ENCODE measurements at regions of chr7 and their contacts with region 1.

Region 1: DNA sequence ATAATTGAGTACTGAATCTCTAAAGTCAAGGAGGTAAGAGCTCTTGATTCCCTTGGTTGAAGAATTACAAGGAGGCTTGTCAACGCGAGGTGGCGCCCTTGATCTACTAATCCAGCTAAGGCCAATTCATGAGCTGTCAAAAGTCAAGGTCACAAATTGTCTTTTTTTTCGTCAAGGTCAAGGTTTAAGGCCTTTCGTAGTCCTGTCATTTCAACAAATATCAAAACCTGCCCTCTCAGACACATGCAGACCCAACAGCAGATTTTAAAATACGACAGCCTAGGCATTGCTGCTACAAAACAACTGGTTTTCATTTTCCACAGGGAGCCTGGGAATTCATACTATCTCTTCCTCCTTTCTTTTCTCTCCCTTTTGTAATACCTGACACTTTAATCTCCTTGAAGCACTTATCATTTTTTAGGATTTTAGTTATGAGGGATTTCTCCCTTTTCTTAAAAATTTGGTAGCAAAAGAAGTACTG is 3.6 kb downstream of the HOXA13 start:
- DNase-seq: peak; percentile 94
- H3K4me3 ChIP-seq: peak overlapping the region; percentile 63 to 78 (median 70)
- H3K27ac ChIP-seq: peak overlapping the region in 3 of 4 donors; percentile 97 to 98 (median 98)
- H3K4me1 ChIP-seq: peaks cover 0 to 60% (median 35%) of the 10 kb centered on the region in 4 donors
- H3K27me3 ChIP-seq: peaks cover 0 to 36% (median 0%) of the 10 kb centered on the region in 3 donors
- CTCF ChIP-seq: peak in 3 of 4 experiments; percentile 58 to 81 (median 76)
- EP300 ChIP-seq: no peak
- POLR2A ChIP-seq: no peak

Region 2: DNA sequence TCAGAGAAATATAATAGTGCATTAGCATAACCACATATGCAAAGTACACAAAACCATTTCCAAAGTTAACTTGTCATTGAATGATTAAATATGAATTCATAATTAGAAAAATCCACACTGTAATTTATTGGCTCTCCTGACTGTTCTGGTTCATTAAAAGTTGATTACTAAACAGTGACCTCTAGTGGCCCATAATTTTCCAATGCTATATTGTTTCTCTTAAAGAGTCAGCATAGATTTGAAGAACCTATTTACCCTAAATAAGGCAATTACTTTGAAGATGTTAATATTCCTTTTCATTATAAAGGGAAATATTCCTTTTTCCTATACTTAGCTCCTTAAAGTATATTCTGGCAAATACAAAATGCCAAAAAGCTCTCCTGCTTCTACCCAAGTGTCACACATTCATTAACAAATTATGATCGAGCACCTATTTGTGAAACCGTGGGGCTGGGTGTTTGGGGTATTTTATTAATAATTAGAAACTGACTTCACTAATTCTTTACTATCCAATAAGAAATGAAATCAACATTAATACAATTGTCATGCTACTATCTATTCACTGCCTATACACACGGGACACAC is 380.1 kb after region 1 on chr7:
- intact Hi-C with region 1: loop called (anchors 2 kb)
- DNase-seq: no peak
- H3K4me3 ChIP-seq: no peak overlapping the region
- H3K27ac ChIP-seq: no peak overlapping the region
- H3K4me1 ChIP-seq: no peaks in the 10 kb centered on the region
- H3K27me3 ChIP-seq: no peaks in the 10 kb centered on the region
- CTCF ChIP-seq: peak in 3 of 4 experiments; percentile 23 to 58 (median 47)
- EP300 ChIP-seq: no peak
- POLR2A ChIP-seq: no peak

Region 3: DNA sequence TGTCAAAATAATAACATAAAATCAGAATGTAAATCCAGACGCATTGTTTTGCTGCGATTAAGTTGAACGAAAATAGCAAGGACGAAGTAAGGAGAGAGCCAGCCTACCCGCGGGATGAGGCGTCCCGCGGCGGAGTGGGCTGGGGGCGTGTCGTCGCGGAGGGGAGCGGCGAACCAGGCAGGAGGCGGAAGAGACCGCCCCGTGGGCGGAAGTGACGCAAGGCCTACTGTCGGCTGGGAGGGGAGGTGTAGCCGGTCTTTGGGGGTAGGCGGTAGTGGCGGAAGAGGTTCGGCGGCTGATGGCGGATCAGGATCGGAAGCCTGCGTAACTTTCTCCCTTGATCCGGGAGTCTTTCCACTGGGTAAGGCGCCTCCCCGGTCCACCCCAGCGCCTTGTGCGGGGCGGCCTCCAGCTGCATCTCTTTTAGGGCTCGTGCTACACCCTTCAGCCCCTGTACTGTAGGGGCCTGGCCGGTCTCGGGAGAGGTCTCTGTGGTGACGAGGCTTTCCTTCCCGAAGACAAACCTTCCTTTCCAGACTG is 543.7 kb after region 1 on chr7 and contains the start of gene TAX1BP1:
- intact Hi-C with region 1: loop called (anchors 5 kb)
- DNase-seq: peak; percentile 98
- H3K4me3 ChIP-seq: peak within 1 kb of the TSS; percentile 68 to 93 (median 90)
- H3K27ac ChIP-seq: peak within 1 kb of the TSS; percentile 93 to 99 (median 97)
- H3K4me1 ChIP-seq: peaks cover 0 to 47% (median 31%) of the 10 kb centered on the region in 4 donors
- H3K27me3 ChIP-seq: no peaks in the 10 kb centered on the region
- CTCF ChIP-seq: no peak
- EP300 ChIP-seq: peak in 1 of 4 donors; percentile 18
- POLR2A ChIP-seq: peak; percentile 99
- total RNA-seq, gene TAX1BP1: 109 to 170 (median 138) TPM

Region 4: DNA sequence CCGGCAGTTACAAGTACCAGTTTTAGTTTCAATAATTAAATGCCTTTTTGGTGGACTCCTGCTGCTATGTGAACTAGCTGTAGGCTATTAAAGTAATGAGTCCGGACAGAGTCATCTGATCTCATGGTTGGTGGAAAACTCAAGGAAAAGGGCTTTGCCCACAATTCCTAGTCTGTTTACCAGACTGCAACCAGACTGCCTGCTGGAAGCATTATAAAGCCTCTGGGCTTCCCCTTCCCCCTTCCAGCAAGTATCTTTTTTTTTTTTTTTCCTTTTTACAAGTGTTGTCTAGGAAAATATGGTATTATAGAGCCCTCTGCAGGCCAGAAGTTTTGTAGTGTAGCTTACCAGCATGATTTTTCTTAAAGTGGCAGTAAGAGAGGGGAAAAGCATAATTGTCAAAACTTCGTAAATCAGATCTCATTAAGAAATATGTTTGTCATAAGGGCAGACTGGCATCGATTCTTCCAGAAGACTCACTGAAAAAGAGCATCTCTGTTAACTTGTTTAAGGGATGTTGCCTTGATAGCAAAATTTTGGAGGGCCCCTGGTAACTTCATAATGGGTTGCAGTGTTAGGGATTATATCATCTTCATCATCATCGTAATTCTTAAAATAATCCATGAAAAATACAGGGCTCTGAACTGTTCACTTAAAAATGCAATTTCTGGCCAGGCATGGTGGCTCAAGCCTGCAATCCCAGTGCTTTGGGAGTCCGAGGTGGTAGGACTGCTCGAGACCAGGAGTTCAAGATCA is 724.9 kb after region 1 on chr7:
- intact Hi-C with region 1: loop called (anchors 2 kb)
- DNase-seq: no peak
- H3K4me3 ChIP-seq: peak overlapping the region in 1 of 4 donors; percentile 3
- H3K27ac ChIP-seq: peak overlapping the region in 2 of 4 donors; percentile 17 to 41
- H3K4me1 ChIP-seq: peaks cover 0 to 52% (median 24%) of the 10 kb centered on the region in 4 donors
- H3K27me3 ChIP-seq: no peaks in the 10 kb centered on the region
- CTCF ChIP-seq: peak; percentile 34 to 50 (median 38)
- EP300 ChIP-seq: no peak
- POLR2A ChIP-seq: no peak

Region 5: GRCh38 chr7:28096713-28097112 is 900.4 kb after region 1 on chr7:
- intact Hi-C with region 1: loop called (anchors 5 kb)
- DNase-seq: peak; percentile 83
- H3K4me3 ChIP-seq: no peak overlapping the region
- H3K27ac ChIP-seq: peak overlapping the region; percentile 21 to 73 (median 54)
- H3K4me1 ChIP-seq: peaks cover 0 to 77% (median 50%) of the 10 kb centered on the region in 4 donors
- H3K27me3 ChIP-seq: no peaks in the 10 kb centered on the region
- CTCF ChIP-seq: peak; percentile 82 to 88 (median 86)
- EP300 ChIP-seq: no peak
- POLR2A ChIP-seq: no peak

Region 6: GRCh38 chr7:28408960-28409715 is 1212.8 kb after region 1 on chr7:
- intact Hi-C with region 1: loop called (anchors 10 kb)
- DNase-seq: peak; percentile 99
- H3K4me3 ChIP-seq: peak overlapping the region; percentile 45 to 77 (median 64)
- H3K27ac ChIP-seq: peak overlapping the region; percentile 86 to 93 (median 92)
- H3K4me1 ChIP-seq: peaks cover 0 to 43% (median 23%) of the 10 kb centered on the region in 4 donors
- H3K27me3 ChIP-seq: no peaks in the 10 kb centered on the region
- CTCF ChIP-seq: no peak
- EP300 ChIP-seq: peak in 1 of 4 donors; percentile 6
- POLR2A ChIP-seq: peak; percentile 50 to 67

Measured in sigmoid colon (tissue), 7 donors.